A549 (cell line): ENCODE measurements at regions of chr6 and their contacts with region 1.

Region 1: DNA sequence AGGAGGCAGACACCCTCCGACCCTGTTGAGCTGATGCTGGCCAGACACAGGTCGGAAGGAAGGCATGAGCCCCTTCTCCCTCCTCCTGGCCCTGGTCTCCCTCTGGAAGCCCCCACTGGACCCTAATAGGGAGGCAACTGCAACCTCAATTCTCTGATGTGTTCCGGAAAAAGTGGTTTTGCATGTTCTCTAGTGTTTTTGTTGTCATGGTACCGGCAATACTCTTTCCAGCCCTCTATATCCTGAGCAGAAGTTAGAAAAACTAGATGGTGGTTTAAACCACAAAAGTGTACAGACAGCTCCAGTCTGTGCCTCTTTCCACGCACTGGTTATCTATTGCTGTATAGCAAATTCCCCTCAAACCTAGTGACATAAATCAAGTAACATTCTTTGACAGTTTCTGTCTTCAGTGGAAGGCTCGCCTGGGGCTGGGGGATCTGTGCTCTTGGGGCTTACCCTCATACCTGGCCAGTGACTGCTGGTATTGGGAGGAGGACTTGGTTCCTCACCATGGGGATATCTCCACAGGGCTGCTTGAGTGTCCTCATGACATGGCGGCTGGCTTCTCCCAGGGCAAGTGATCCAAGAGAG is 37.0 kb downstream of the SYTL3 start:
- DNase-seq: no peak
- ATAC-seq: no peak
- H3K4me3 ChIP-seq: no peak overlapping the region
- H3K27ac ChIP-seq: no peak overlapping the region
- H3K4me1 ChIP-seq: no peaks in the 10 kb centered on the region
- CTCF ChIP-seq: no peak
- EP300 ChIP-seq: no peak
- POLR2A ChIP-seq: no peak
- RAD21 ChIP-seq: no peak

Region 2: DNA sequence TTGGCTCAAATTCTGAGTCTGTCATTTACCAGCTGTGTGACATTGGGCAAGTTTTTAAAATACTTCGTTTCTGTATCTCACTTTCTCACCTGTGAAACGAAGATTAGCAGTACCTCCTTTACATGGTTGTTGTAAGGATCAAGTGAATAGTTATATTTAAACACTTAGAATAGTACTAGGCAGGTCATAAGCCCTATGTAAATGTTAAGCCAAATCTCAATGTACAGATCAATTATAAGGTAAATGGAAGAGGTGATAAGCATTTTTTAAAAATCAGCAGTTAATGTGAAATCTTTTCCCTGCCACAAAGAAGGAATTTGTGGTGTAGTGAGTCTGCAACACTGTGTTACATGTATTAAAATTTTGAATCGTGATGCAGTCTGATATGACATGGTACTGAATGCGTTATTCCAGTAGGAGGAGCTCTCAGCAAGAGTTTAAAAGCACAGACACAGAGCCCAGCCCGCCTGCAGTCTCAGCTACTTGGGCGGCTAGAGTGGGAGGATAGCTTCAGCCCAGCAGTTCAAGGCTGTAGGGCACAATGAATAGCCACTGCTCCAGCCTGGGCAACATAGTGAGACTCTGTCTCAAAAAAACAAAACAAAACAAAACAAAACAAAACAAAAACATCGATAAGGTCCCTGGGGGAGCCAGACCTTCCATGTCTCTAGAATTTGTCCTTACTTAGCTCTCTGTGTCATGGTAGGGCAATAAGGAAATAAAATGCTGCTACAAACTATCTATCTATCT is 472.8 kb before region 1 on chr6:
- CTCF ChIA-PET with region 1: interaction called, 11 read pairs
- POLR2A ChIA-PET with region 1: interaction called, 4 read pairs
- DNase-seq: peak; percentile 35 to 76
- ATAC-seq: peak; percentile 100
- H3K4me3 ChIP-seq: no peak overlapping the region
- H3K27ac ChIP-seq: no peak overlapping the region
- H3K4me1 ChIP-seq: peaks cover 12% of the 10 kb centered on the region; the same call in 2 of the 3 replicates
- CTCF ChIP-seq: peak; percentile 73
- EP300 ChIP-seq: no peak
- POLR2A ChIP-seq: no peak
- RAD21 ChIP-seq: peak; percentile 77 to 83

Region 3: GRCh38 chr6:158220786-158221442 is 466.0 kb before region 1 on chr6:
- CTCF ChIA-PET with region 1: interaction called, 11 read pairs
- POLR2A ChIA-PET with region 1: interaction called, 4 read pairs
- DNase-seq: peak; percentile 51 to 80
- ATAC-seq: peak; percentile 98 to 99
- H3K4me3 ChIP-seq: no peak overlapping the region
- H3K27ac ChIP-seq: no peak overlapping the region; a peak in 2 of 6 replicates
- H3K4me1 ChIP-seq: peaks cover 10% of the 10 kb centered on the region; the same call in 2 of the 3 replicates
- CTCF ChIP-seq: peak; percentile 89
- EP300 ChIP-seq: no peak
- POLR2A ChIP-seq: no peak
- RAD21 ChIP-seq: peak; percentile 90 to 92

Region 4: GRCh38 chr6:158644231-158645063 is 42.4 kb before region 1 on chr6 and contains the start of gene DYNLT1:
- CTCF ChIA-PET with region 1: interaction called, 14 read pairs
- POLR2A ChIA-PET with region 1: no interaction called
- DNase-seq: peak; percentile 77 to 88
- ATAC-seq: peak; percentile 94 to 96
- H3K4me3 ChIP-seq: peak within 1 kb of the TSS; percentile 84
- H3K27ac ChIP-seq: peak within 1 kb of the TSS; percentile 89 to 99
- H3K4me1 ChIP-seq: peaks cover 19% of the 10 kb centered on the region
- CTCF ChIP-seq: no peak
- EP300 ChIP-seq: no peak
- POLR2A ChIP-seq: peak; percentile 89
- RAD21 ChIP-seq: no peak
- polyA plus RNA-seq, gene DYNLT1: 174 and 232 TPM in 2 replicates

Region 5: GRCh38 chr6:158649289-158650143 is 37.4 kb before region 1 on chr6 and contains the start of gene SYTL3:
- CTCF ChIA-PET with region 1: interaction called, 14 read pairs
- POLR2A ChIA-PET with region 1: no interaction called
- DNase-seq: no peak
- ATAC-seq: no peak
- H3K4me3 ChIP-seq: no peak within 1 kb of the TSS
- H3K27ac ChIP-seq: no peak within 1 kb of the TSS
- H3K4me1 ChIP-seq: peaks cover 6% of the 10 kb centered on the region
- CTCF ChIP-seq: no peak
- EP300 ChIP-seq: no peak
- POLR2A ChIP-seq: no peak
- RAD21 ChIP-seq: no peak
- polyA plus RNA-seq, gene SYTL3: 0.63 and 1.1 TPM in 2 replicates

Region 6: GRCh38 chr6:158704181-158704822 is 17.4 kb after region 1 on chr6:
- CTCF ChIA-PET with region 1: interaction called, 28 read pairs
- POLR2A ChIA-PET with region 1: interaction called, 4 read pairs
- DNase-seq: peak; percentile 65 to 75
- ATAC-seq: peak; percentile 86 to 95
- H3K4me3 ChIP-seq: peak overlapping the region; percentile 43
- H3K27ac ChIP-seq: peak overlapping the region; percentile 86 to 89
- H3K4me1 ChIP-seq: peaks cover 36% of the 10 kb centered on the region
- CTCF ChIP-seq: peak; percentile 83
- EP300 ChIP-seq: no peak
- POLR2A ChIP-seq: no peak
- RAD21 ChIP-seq: peak; percentile 83 to 94